Gastrocnemius medialis (tissue), 4 donors: ENCODE measurements at regions of chr10 and their contacts with region 1.

Region 1: DNA sequence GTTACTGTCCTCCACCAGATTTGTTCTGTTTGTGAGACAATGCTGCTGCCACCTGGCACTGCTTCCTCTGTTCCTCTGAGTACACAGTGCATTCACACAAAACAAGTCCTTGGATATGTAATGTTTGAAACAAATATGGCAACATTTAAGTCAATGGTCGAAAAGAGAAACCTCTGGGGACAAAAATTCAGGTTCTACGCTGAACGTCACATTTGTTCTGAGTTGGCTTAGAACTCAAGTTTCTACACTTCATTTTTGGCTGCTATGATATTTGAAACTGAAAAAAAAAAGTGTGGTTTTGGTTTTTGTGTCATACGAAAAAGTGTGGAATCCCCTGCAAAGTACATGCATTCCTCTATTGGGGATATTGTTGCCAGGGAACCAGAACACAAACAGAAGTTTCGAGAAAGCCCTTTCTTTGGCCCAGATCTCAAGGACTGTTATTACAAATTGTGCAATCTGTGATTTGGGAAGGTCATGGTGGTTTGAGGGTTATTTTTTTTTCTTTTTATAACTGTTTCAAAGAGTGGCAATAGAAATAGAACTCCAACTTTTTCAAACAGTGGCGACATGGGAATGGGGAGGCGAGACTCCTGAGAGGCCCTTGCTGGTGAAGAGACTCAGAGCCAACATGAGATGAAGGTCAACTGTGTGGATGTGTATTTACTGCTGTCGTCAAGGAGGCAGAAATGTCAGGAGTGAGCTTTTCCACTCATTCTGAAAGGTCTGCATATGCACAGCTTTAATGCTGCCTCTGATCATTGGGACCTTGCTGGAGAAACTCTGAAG is 127.5 kb downstream of the CUBN start:
- DNase-seq: peak; percentile 15 to 46
- ATAC-seq: peak; percentile 62 to 78
- H3K4me3 ChIP-seq: no peak overlapping the region
- H3K27ac ChIP-seq: peak overlapping the region; percentile 53 to 60 (median 56)
- H3K4me1 ChIP-seq: peaks cover 0 to 3% of the 10 kb centered on the region in 2 donors
- H3K27me3 ChIP-seq: no peaks in the 10 kb centered on the region
- CTCF ChIP-seq: no peak
- POLR2A ChIP-seq: no peak

Region 2: GRCh38 chr10:16891375-16892313 is 110.5 kb before region 1 on chr10:
- in situ Hi-C with region 1: no loop called
- intact Hi-C with region 1: loop called (anchors 5 kb)
- DNase-seq: peak; percentile 8 to 43
- ATAC-seq: peak; percentile 65 to 71
- H3K4me3 ChIP-seq: no peak overlapping the region
- H3K27ac ChIP-seq: no peak overlapping the region
- H3K4me1 ChIP-seq: no peaks in the 10 kb centered on the region
- H3K27me3 ChIP-seq: no peaks in the 10 kb centered on the region
- CTCF ChIP-seq: peak; percentile 23 to 54 (median 29)
- POLR2A ChIP-seq: no peak

Region 3: DNA sequence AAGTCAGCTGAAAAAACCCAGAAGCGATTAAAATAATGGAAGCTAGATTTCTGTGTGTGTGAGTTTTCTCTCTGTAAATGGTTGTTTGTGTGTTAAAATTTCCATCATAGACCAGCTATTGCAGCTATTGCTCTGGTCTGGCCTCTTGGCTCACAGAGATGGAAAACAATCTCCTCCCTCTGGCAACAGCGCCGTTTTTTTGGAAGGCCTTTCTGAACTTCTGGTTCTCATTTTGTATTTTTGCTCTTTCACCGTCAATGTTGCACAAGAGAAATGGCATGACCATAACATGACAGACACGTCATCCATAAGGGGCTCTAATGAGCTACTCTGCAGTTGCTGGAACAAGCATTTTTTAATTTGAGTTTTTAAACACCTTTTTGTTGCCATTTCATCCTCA is 36.5 kb after region 1 on chr10:
- in situ Hi-C with region 1: no loop called
- intact Hi-C with region 1: loop called (anchors 5 kb)
- DNase-seq: peak; percentile 38 to 68
- ATAC-seq: peak; percentile 78 to 92
- H3K4me3 ChIP-seq: no peak overlapping the region
- H3K27ac ChIP-seq: peak overlapping the region; percentile 10 to 60 (median 47)
- H3K4me1 ChIP-seq: no peaks in the 10 kb centered on the region
- H3K27me3 ChIP-seq: no peaks in the 10 kb centered on the region
- CTCF ChIP-seq: no peak
- POLR2A ChIP-seq: no peak

Region 4: GRCh38 chr10:17228091-17228940 is 226.2 kb after region 1 on chr10 and contains the start of gene VIM:
- in situ Hi-C with region 1: no loop called
- intact Hi-C with region 1: loop called (anchors 5 kb)
- DNase-seq: peak; percentile 77 to 84
- ATAC-seq: peak; percentile 66 to 70
- H3K4me3 ChIP-seq: peak within 1 kb of the TSS; percentile 56 to 83 (median 72)
- H3K27ac ChIP-seq: peak within 1 kb of the TSS; percentile 91 to 94 (median 92)
- H3K4me1 ChIP-seq: peaks cover 13 to 22% of the 10 kb centered on the region in 2 donors
- H3K27me3 ChIP-seq: peaks cover 24 to 59% (median 48%) of the 10 kb centered on the region in 3 donors
- CTCF ChIP-seq: peak in 1 of 5 experiments; percentile 10
- POLR2A ChIP-seq: peak; percentile 23 to 41
- total RNA-seq, gene VIM: 355 to 835 (median 589) TPM